ENCODE measurements at regions of chr1 and their contacts with region 1.

Region 1: DNA sequence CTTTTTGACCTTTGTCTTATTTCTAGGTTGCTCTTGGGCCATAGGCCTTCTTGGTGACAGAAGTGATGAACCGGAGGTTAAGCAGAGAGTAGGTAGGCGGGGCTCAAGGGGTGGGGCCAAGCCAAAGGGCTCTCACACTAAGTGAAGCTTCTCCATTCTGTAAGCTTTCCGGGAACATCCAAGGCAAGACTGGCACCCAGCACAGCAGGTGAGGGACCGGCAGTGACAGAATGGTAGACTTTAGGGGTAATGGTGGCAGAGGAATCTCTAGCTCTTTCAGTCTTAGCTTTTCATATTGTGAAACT is at the start of gene TNFAIP8L2:
- DNase-seq: no peak
- H3K4me3 ChIP-seq: no peak within 1 kb of the TSS
- CTCF ChIP-seq: no peak

Region 2: DNA sequence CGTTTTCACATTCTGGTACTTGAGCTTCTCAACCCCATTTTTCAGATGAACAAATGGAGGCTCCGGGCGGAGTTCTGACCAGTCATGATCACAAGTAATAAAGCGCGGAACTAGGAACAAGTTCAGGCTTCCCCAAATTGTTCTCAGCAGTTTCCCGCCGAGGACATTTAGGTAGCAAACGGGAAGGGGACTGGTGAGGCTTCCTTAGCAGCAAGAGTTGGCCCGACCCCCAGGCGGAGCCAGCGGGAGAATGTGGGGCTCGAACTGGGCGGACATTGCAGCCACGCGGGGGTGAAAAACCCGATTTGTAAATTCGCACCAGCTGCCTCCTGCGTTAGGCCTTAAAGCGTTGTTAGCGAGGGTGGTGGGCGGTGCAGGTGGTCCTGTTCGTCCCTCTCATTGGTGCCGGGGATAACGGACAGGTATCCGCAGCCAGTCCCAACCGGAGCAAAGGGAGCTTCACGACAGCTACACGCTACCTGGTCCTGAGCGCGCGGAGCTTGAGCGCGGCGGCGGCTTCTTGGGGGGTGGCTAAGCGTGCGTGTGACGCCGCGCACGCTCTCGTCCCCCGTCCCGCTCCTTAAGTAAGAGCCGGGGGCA is 25.4 kb before region 1 on chr1:
- CTCF ChIA-PET with region 1: interaction called, 13 read pairs
- POLR2A ChIA-PET with region 1: no interaction called
- DNase-seq: peak; percentile 17
- H3K4me3 ChIP-seq: peak overlapping the region; percentile 44
- CTCF ChIP-seq: no peak

Region 3: DNA sequence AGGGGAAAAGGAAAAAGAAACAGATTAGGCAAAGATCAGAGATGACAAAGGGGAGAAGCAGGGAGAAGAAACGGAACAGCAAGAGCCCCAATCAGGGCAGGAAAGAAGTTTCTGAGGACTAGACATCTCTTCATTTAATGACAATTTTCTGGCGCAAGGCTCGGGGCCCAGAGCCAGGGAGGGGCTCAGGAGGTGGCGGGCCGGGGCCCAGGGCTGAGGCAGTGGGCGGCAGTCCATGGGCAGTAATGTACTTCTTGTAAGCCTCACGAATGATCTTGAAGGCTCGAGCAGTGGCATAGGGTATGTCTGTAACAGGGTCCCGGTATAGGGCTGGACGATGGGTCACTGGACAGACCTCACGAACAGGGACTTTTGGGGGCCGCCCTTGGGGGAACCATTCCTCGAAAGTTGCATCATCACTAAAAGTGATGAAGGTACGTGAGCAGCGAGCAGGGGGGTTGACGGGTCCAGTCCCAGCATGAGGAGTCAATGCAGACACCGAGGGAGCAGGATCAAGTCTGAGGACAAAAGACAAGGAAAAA is 20.1 kb after region 1 on chr1:
- CTCF ChIA-PET with region 1: no interaction called
- POLR2A ChIA-PET with region 1: no interaction called
- DNase-seq: no peak
- H3K4me3 ChIP-seq: no peak overlapping the region
- CTCF ChIP-seq: no peak

Measured in AG04449 (cell line).